Transverse colon (tissue), 4 donors: ENCODE measurements at regions of chr17 and their contacts with region 1.

Region 1: DNA sequence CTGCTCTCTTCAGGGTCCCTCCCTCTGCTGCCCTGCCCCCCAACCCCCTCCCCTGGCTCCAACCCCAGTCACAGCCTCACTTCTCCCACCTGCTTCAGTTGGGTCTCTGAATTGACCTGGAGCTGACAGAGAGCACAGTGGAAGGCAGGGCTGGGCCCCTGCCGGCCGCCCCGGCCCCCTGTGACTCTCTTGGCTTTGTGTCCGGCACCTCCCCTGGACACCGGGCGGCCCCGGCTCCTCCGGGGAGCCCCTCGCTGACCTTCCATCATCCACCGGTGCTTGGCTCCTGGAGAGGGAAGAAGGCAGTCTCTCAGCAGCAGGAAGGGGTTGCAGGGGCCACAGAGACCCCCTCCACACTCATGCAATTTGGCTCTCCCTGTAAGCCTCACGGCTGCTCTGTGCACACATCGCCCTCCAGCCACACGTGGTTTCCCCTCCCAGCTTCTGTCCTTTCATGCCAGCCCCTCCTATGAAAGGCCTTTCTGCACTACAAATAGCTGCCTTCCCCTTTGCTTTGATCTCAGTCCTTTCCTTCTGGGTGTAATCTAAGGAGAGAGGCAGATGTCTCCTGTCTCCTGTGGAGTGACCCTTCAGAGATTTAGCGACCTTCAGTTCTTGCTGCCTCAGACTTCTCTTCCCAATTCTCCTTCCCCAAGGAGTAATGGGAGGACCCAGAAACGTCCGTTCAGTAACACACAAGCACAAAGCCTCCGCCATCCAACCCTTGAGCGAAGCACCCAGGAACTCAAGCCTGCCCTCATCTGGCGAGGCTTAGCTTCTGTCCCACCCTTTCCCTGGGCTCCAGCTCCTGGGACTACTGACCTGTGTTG is 8.3 kb downstream of the NKIRAS2 start:
- DNase-seq: no peak
- H3K4me3 ChIP-seq: no peak overlapping the region
- H3K27ac ChIP-seq: no peak overlapping the region
- H3K4me1 ChIP-seq: peaks cover 4 to 18% (median 12%) of the 10 kb centered on the region in 4 donors
- H3K27me3 ChIP-seq: no peaks in the 10 kb centered on the region
- CTCF ChIP-seq: peak in 1 of 5 experiments; percentile 4
- EP300 ChIP-seq: no peak
- POLR2A ChIP-seq: no peak

Region 2: DNA sequence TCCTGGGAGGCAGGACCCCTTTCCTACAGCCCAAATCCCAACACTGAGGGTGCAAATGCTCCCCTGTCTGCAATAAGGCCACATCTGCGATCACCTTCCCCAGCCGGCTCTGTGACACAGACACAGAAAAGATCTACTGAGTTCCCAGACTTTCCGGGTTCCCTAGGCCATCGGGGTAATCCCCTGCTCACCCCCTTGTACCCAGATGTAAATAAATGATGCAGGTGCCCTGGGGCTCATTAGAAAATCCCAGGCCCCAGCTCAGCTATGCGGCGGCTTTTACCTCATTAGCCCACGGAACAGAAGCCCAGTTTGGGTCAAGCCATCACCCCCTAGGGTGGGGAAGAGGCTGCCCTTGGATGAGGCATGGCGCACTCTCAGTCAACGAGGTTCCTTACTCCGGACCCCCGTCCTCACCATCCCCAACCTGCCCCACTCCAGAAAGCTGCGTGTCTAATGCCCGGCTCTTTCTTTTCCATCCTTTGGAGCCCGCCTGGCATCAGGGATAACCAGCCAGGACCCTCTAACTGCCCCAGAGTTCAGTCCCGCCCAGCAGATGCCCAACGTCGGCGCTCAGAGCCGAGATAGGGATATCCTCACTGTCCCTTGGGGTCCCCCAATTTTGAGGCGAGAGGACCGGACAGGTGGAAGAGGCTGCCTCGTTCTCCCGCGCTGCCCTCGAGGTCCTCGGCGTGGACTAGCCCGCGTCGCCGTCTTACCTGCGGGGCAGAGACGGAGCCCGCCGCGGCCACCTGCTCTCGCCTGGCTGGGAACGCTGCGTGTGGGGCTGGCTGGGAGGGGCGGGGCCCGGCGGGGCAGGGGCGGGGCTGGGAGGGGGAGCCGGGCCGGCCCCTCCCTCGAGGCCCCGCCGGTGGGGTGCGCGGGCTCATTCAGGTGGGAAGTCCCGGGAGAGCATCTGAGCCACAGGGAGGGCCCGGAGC is 69.8 kb after region 1 on chr17 and contains the start of gene ZNF385C:
- in situ Hi-C with region 1: no loop called
- intact Hi-C with region 1: loop called (anchors 5 kb)
- DNase-seq: no peak
- H3K4me3 ChIP-seq: peak within 1 kb of the TSS in 2 of 4 donors; percentile 15 to 16
- H3K27ac ChIP-seq: no peak within 1 kb of the TSS
- H3K4me1 ChIP-seq: peaks cover 0 to 11% (median 9%) of the 10 kb centered on the region in 4 donors
- H3K27me3 ChIP-seq: peaks cover 32% of the 10 kb centered on the region
- CTCF ChIP-seq: no peak
- EP300 ChIP-seq: no peak
- POLR2A ChIP-seq: no peak
- total RNA-seq, gene ZNF385C: 0.27 to 0.48 TPM in 2 of 4 donors, not detected in the others

Region 3: GRCh38 chr17:42120161-42120769 is 92.1 kb after region 1 on chr17:
- in situ Hi-C with region 1: no loop called
- intact Hi-C with region 1: no loop called
- DNase-seq: no peak
- H3K4me3 ChIP-seq: peak overlapping the region in 3 of 4 donors; percentile 55 to 94 (median 89)
- H3K27ac ChIP-seq: peak overlapping the region in 1 of 4 donors; percentile 82
- H3K4me1 ChIP-seq: peaks cover 18 to 26% (median 22%) of the 10 kb centered on the region in 4 donors
- H3K27me3 ChIP-seq: no peaks in the 10 kb centered on the region
- CTCF ChIP-seq: no peak
- EP300 ChIP-seq: no peak
- POLR2A ChIP-seq: no peak